AG04450 (cell line): ENCODE measurements at regions of chr6 and their contacts with region 1.

Region 1: GRCh38 chr6:148177589-148178233 is 164.9 kb upstream of the SASH1 start:
- DNase-seq: peak; percentile 30
- H3K4me3 ChIP-seq: no peak overlapping the region
- H3K27ac ChIP-seq: no peak overlapping the region
- H3K27me3 ChIP-seq: no peaks in the 10 kb centered on the region
- CTCF ChIP-seq: peak; percentile 71

Region 2: DNA sequence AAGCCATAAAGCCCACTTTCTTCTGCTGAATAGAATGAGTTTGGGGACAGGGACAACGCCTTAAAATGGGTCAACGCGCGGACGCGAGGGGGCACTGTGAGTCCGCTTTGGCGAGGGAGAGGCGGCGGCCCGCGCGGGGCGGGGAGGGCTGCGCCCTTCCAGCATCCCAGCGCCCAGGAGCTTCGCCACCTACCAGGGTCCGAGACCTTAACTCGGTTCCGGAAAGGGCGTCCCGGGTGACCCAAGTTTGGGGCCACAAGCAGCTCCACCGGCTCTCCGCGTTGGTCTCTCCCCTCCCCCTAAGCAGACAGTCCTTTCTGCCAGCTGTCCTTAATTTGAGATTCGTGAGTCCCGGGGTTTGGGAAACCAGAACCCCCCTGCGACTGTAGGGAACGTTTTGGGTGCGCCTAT is 671.0 kb before region 1 on chr6:
- CTCF ChIA-PET with region 1: interaction called, 10 read pairs
- POLR2A ChIA-PET with region 1: interaction called, 3 read pairs
- DNase-seq: no peak
- H3K4me3 ChIP-seq: peak overlapping the region; percentile 72
- H3K27ac ChIP-seq: no peak overlapping the region
- H3K27me3 ChIP-seq: peaks cover 40% of the 10 kb centered on the region
- CTCF ChIP-seq: peak; percentile 89

Region 3: GRCh38 chr6:147909640-147910039 is 268.1 kb before region 1 on chr6:
- CTCF ChIA-PET with region 1: no interaction called
- POLR2A ChIA-PET with region 1: no interaction called
- DNase-seq: no peak
- H3K4me3 ChIP-seq: no peak overlapping the region
- H3K27ac ChIP-seq: no peak overlapping the region
- H3K27me3 ChIP-seq: no peaks in the 10 kb centered on the region
- CTCF ChIP-seq: no peak

Region 4: GRCh38 chr6:148044261-148044751 is 133.4 kb before region 1 on chr6:
- CTCF ChIA-PET with region 1: no interaction called
- POLR2A ChIA-PET with region 1: no interaction called
- DNase-seq: peak; percentile 20
- H3K4me3 ChIP-seq: no peak overlapping the region
- H3K27ac ChIP-seq: peak overlapping the region; percentile 49
- H3K27me3 ChIP-seq: no peaks in the 10 kb centered on the region
- CTCF ChIP-seq: no peak

Region 5: GRCh38 chr6:148166339-148166968 is 11.3 kb before region 1 on chr6:
- CTCF ChIA-PET with region 1: interaction called, 21 read pairs
- POLR2A ChIA-PET with region 1: no interaction called
- DNase-seq: peak; percentile 33
- H3K4me3 ChIP-seq: no peak overlapping the region
- H3K27ac ChIP-seq: no peak overlapping the region
- H3K27me3 ChIP-seq: no peaks in the 10 kb centered on the region
- CTCF ChIP-seq: peak; percentile 72

Region 6: GRCh38 chr6:148200293-148200692 is 22.6 kb after region 1 on chr6:
- CTCF ChIA-PET with region 1: interaction called, 10 read pairs
- POLR2A ChIA-PET with region 1: no interaction called
- DNase-seq: no peak
- H3K4me3 ChIP-seq: no peak overlapping the region
- H3K27ac ChIP-seq: no peak overlapping the region
- H3K27me3 ChIP-seq: no peaks in the 10 kb centered on the region
- CTCF ChIP-seq: no peak

Region 7: GRCh38 chr6:148250975-148251685 is 73.4 kb after region 1 on chr6:
- CTCF ChIA-PET with region 1: interaction called, 102 read pairs
- POLR2A ChIA-PET with region 1: no interaction called
- DNase-seq: peak; percentile 46
- H3K4me3 ChIP-seq: no peak overlapping the region
- H3K27ac ChIP-seq: no peak overlapping the region
- H3K27me3 ChIP-seq: no peaks in the 10 kb centered on the region
- CTCF ChIP-seq: peak; percentile 65

Region 8: GRCh38 chr6:148263010-148263409 is 85.3 kb after region 1 on chr6:
- CTCF ChIA-PET with region 1: interaction called, 27 read pairs
- POLR2A ChIA-PET with region 1: no interaction called
- DNase-seq: no peak
- H3K4me3 ChIP-seq: no peak overlapping the region
- H3K27ac ChIP-seq: no peak overlapping the region
- H3K27me3 ChIP-seq: no peaks in the 10 kb centered on the region
- CTCF ChIP-seq: no peak

Region 9: DNA sequence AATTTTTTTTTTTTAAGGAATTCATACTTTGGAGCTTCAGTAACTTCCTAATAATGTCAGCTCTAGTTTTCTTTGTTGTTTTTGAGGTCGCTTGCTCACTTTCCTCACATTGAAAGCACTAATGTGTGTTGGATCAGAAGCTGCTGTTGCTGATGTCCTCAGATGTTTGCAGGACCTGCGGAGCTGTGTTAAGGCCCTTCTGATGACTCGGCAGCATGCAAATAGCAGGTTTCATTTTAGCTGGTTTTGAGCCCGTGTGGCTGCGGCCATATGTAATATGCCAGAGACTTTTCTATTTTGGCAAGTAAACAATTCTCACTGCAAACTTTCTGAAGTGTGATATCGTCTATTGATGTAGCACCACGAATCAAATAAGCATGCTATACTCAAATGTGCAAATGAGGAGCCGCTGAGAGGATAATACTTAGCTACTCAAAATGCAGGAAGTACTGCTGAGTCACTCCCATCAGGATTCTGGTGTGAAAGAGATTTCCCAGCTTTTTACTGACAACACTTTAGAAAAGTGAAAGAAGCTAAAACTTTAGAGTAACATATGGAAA is 352.8 kb after region 1 on chr6:
- CTCF ChIA-PET with region 1: interaction called, 21 read pairs
- POLR2A ChIA-PET with region 1: no interaction called
- DNase-seq: peak; percentile 93
- H3K4me3 ChIP-seq: peak overlapping the region; percentile 39
- H3K27ac ChIP-seq: peak overlapping the region; percentile 97
- H3K27me3 ChIP-seq: no peaks in the 10 kb centered on the region
- CTCF ChIP-seq: no peak